ENCODE measurements at regions of chr2 and their contacts with region 1.

Region 1: DNA sequence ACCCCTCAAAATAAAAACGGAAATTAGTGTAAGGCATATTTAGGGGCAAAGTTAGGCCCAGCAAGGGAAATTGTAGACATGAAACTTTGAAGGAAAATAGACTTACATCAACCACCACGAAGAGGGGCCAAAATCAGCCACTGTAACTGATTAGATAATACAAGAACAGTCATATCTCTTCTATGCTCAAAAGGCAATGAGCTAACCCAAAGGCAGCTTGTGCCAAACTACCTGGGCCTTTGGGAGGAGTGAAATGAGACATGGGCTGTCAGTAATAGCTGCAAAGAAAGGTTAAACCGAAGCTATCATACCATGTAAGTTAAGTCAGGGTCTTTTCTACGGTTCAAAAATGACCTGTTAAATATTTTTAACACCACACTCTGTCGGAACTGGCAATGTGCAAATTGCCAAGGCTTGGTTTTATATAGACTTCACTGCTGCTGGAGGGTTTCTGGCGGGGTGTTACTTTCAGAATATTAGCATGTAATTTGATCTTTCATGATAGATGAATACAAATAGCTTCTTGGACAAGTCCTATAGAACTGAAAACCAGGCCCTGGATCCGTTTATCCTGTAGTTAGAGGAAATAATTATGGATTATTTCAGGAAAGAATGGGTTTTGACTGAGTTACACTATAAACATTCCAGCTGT is 69.6 kb downstream of the ACVR1 start:
- DNase-seq: no peak
- ATAC-seq: no peak
- H3K4me3 ChIP-seq: no peak overlapping the region
- H3K27ac ChIP-seq: no peak overlapping the region
- H3K4me1 ChIP-seq: peaks cover 4 to 10% of the 10 kb centered on the region in 2 experiments; a peak in 4 of 5 replicates
- H3K27me3 ChIP-seq: no peaks in the 10 kb centered on the region
- CTCF ChIP-seq: no peak
- EP300 ChIP-seq: no peak
- POLR2A ChIP-seq: no peak
- RAD21 ChIP-seq: no peak

Region 2: DNA sequence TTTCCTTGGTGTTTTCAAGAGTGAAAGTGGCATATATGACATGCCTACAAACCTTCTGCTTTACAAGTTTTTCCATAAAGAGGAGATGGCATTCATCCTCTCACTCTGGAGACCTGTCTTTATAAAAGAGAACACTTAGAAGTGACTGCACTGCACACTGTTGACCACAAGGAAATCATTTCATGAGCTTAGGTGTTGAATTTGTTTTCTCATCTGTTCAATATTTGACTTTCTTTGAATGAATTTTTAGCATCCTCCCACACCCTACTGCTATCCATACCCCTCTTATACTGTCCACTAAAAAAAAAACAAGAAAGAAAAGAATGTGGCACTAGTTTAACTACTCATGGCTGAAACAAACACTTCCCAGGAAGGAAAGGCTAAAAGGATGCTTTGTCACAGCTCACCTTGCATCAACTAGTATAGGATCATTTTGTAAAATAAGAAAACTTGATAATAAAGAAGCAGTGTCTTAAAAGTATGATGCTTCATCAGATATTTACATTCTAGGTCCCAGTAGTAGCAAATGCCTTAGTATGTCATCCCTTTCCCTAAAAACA is 13.4 kb before region 1 on chr2:
- CTCF ChIA-PET with region 1: no interaction called
- POLR2A ChIA-PET with region 1: interaction called, 11 read pairs
- in situ Hi-C with region 1: no loop called
- intact Hi-C with region 1: no loop called
- DNase-seq: peak in 2 of 4 experiments; percentile 13 to 25
- ATAC-seq: peak; percentile 55
- H3K4me3 ChIP-seq: no peak overlapping the region
- H3K27ac ChIP-seq: no peak overlapping the region
- H3K4me1 ChIP-seq: peaks cover 0 to 39% of the 10 kb centered on the region in 2 experiments; a peak in 4 of 5 replicates
- H3K27me3 ChIP-seq: no peaks in the 10 kb centered on the region
- CTCF ChIP-seq: peak in 2 of 3 experiments; percentile 2 to 35; a peak in 2 of 6 replicates
- EP300 ChIP-seq: no peak
- POLR2A ChIP-seq: no peak
- RAD21 ChIP-seq: no peak

Measured in K562 (cell line).